Right lobe of liver (tissue), 6 donors: ENCODE measurements at regions of chr18 and their contacts with region 1.

Region 1: DNA sequence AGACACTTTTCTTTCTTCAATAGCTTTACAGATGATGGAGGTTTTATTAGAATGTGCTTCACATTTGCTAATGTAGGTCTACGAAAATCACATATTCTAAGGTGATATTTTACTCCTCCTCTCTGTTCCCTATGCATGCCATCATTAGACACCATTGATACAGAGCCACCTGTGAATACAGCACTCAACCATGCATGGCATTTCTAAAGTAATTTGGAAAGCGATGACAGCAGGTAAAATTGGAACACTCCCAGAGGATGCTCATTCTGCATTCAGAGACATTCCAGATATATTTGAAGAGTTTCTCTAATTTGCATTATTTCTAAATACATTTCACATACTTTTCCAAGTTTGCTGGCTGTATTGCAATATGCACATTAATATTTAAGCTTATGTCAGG is 65.3 kb upstream of the RIT2 start:
- DNase-seq: no peak
- ATAC-seq: no peak
- H3K4me3 ChIP-seq: no peak overlapping the region
- H3K27ac ChIP-seq: no peak overlapping the region
- H3K4me1 ChIP-seq: no peaks in the 10 kb centered on the region
- H3K27me3 ChIP-seq: no peaks in the 10 kb centered on the region
- CTCF ChIP-seq: no peak
- POLR2A ChIP-seq: no peak

Region 2: GRCh38 chr18:43129946-43130524 is 50.8 kb before region 1 on chr18:
- intact Hi-C with region 1: loop called in 1 of 2 experiments (anchors 10 kb)
- DNase-seq: no peak
- ATAC-seq: peak; percentile 72 to 89 (median 84)
- H3K4me3 ChIP-seq: peak overlapping the region; percentile 15 to 50 (median 33)
- H3K27ac ChIP-seq: no peak overlapping the region
- H3K4me1 ChIP-seq: no peaks in the 10 kb centered on the region
- H3K27me3 ChIP-seq: no peaks in the 10 kb centered on the region
- CTCF ChIP-seq: no peak
- POLR2A ChIP-seq: no peak